ENCODE measurements at regions of chr15 and their contacts with region 1.

Region 1: GRCh38 chr15:68277603-68278344 is at the start of gene FEM1B:
- DNase-seq: peak; percentile 87 to 92 (median 89)
- ATAC-seq: peak; percentile 87
- H3K4me3 ChIP-seq: peak within 1 kb of the TSS; percentile 69
- H3K27ac ChIP-seq: peak within 1 kb of the TSS; percentile 84
- H3K4me1 ChIP-seq: peaks cover 12 to 13% of the 10 kb centered on the region in 2 experiments; a peak in 4 of 5 replicates
- H3K27me3 ChIP-seq: 0 out of 5 replicates have a peak, but pooled peaks cover 0 to 4% of the 10 kb centered on the region in 2 experiments
- CTCF ChIP-seq: no peak
- EP300 ChIP-seq: peak; percentile 50
- POLR2A ChIP-seq: peak; percentile 91
- RAD21 ChIP-seq: no peak
- polyA plus RNA-seq, gene FEM1B: 5.9 to 6.5 TPM

Region 2: DNA sequence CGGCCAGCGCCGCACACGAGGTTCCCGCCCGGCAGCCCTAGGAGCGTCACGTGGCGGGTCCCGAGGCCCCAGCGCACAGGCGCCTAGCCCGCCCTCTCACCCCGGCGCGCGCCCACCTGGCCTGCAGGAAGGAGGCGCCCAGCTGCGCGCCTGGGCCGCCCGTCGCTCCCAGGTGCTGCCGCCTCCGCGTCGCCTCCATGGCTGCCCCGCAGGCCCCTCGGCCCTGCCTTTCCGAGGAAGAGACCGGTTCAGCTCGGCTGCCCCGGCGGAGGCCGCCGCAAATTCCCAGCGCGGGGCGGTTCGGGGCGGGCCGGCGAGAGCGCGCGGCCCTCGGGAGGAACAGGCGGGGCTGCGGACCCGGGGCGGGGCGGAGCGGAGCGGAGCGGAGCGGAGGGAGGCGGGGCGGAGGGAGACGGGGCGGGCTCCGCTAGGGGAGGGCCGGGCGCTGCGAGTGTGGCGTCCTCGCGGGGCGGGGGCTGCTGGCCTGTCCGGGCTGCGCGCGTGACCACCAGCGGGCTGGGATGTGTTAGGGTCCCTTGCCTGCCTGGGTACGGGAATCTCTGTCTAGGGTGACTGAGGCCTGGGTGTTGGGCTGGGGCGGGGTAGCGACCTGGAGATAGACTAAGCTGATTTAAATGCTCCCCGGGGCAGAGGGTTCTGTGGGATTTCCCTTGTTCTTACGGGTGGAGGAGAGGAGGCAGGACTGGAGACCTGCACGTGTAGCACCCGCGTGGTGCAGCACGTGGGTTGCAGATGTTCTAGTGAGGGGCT is 48.2 kb before region 1 on chr15 and contains the start of gene CLN6:
- CTCF ChIA-PET with region 1: no interaction called
- POLR2A ChIA-PET with region 1: interaction called, 10 read pairs
- in situ Hi-C with region 1: no loop called
- intact Hi-C with region 1: no loop called
- DNase-seq: peak; percentile 87 to 96 (median 96)
- ATAC-seq: peak; percentile 91
- H3K4me3 ChIP-seq: peak within 1 kb of the TSS; percentile 93
- H3K27ac ChIP-seq: peak within 1 kb of the TSS; percentile 95
- H3K4me1 ChIP-seq: peaks cover 39 to 43% of the 10 kb centered on the region in 2 experiments
- H3K27me3 ChIP-seq: no peaks in the 10 kb centered on the region
- CTCF ChIP-seq: no peak
- EP300 ChIP-seq: no peak
- POLR2A ChIP-seq: peak; percentile 78
- RAD21 ChIP-seq: 0 out of 4 replicates have a peak, but pooled peaks of 1 of the 2 experiments have one; percentile 34
- polyA plus RNA-seq, gene CLN6: 0.71 to 0.77 TPM

Region 3: DNA sequence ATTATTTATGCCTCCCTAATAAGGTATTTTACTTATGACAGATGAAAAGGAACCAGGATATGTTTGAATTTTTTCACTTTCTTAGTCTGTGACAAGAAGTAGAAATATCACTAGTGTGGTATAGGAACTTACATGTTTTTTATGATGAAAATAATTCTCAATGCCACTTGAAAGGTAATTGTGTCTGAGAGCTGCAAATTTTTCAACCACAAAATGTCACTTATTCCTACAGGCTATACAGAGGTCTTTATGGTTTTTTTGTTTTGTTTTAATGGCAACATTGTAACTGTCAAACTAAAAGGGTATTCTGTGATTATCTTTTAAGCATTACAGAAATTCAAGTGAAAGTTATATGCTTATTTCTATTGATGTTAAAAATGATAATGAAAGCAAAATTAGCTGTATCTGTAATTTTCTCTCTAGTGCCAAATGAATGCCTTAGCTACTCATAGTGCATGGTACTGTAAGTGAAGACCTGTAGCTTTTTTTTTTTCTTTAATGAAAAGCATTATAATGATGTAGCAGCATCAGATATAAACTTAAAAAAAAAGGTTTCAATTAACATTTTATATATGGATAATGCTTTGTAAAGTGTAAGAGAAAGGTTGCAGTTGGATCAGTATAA is 14.5 kb after region 1 on chr15:
- CTCF ChIA-PET with region 1: no interaction called
- POLR2A ChIA-PET with region 1: interaction called, 12 read pairs
- in situ Hi-C with region 1: no loop called
- intact Hi-C with region 1: no loop called
- DNase-seq: no peak
- ATAC-seq: no peak
- H3K4me3 ChIP-seq: no peak overlapping the region
- H3K27ac ChIP-seq: no peak overlapping the region
- H3K4me1 ChIP-seq: no peaks in the 10 kb centered on the region; a peak in 1 of 5 replicates
- H3K27me3 ChIP-seq: no peaks in the 10 kb centered on the region
- CTCF ChIP-seq: no peak
- EP300 ChIP-seq: no peak
- POLR2A ChIP-seq: no peak
- RAD21 ChIP-seq: no peak

Measured in K562 (cell line).